HEK293T (cell line): ENCODE measurements at regions of chr20 and their contacts with region 1.

Region 1: GRCh38 chr20:64053841-64054661 is 4.6 kb upstream of the SOX18 start:
- DNase-seq: peak; percentile 45

Region 2: DNA sequence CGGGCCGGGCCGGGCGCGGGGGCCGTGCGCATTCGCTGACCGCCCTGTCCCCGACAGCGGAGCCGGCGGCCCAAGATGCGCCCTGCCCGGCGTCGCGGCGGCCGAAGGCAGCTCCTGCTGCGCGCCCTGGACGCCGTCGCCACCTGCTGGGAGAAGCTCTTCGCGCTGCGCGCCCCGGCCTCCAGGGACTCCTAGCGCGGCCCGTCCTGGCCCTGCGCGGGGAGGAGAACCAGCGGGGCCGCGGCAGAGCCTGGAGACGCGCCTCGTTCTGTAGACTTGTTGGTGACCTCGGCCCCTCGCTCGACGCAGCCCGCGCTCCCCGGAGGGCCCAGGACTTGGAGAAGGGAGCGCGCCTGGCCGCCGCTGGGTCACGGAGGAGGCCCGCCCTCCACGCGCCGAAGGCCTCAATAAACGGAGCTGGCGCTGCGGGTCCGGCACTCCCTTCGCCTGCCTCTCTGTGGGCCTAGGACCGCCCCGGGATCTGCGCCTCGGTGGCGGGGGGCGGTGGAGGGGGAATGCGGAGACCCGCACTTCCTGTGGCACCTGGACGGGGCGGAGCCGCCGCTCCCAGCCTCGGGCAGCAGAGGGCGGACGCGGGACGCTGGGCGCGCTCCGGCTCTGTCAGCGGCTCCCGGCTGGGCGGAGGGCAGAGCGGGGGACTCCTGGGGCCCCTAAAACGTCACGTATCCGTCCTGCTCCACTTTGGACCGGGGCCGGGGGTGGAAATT is 15.3 kb before region 1 on chr20:
- CTCF ChIA-PET with region 1: interaction called, 10 read pairs
- POLR2A ChIA-PET with region 1: interaction called, 12 read pairs
- DNase-seq: peak; percentile 88